ENCODE measurements at regions of chr3 and their contacts with region 1.

Region 1: GRCh38 chr3:19885468-19885867 is 48.5 kb downstream of the EFHB start:
- DNase-seq: peak; percentile 6
- H3K4me3 ChIP-seq: no peak overlapping the region
- CTCF ChIP-seq: peak; percentile 59

Region 2: GRCh38 chr3:19920401-19921075 is 35.1 kb after region 1 on chr3:
- in situ Hi-C with region 1: no loop called
- DNase-seq: no peak
- H3K4me3 ChIP-seq: no peak overlapping the region
- CTCF ChIP-seq: no peak

Region 3: GRCh38 chr3:19940638-19941037 is 55.2 kb after region 1 on chr3:
- in situ Hi-C with region 1: loop called (anchors 5 kb)
- DNase-seq: no peak
- H3K4me3 ChIP-seq: no peak overlapping the region
- CTCF ChIP-seq: no peak

Region 4: GRCh38 chr3:20185701-20186598 is 300.5 kb after region 1 on chr3 and contains the start of gene SGO1:
- in situ Hi-C with region 1: loop called (anchors 10 kb)
- DNase-seq: peak; percentile 96
- H3K4me3 ChIP-seq: peak within 1 kb of the TSS; percentile 90
- CTCF ChIP-seq: peak; percentile 13